PC-3 (cell line): ENCODE measurements at regions of chr15 and their contacts with region 1.

Region 1: GRCh38 chr15:78979456-78980320 is 34.8 kb upstream of the CTSH start:
- DNase-seq: peak; percentile 92
- ATAC-seq: peak; percentile 91
- H3K4me3 ChIP-seq: no peak overlapping the region
- H3K27ac ChIP-seq: peak overlapping the region; percentile 19; the same call in 1 of the 2 replicates
- H3K4me1 ChIP-seq: peaks cover 5% of the 10 kb centered on the region; the same call in 1 of the 2 replicates
- H3K27me3 ChIP-seq: no peaks in the 10 kb centered on the region
- CTCF ChIP-seq: peak; percentile 84

Region 2: DNA sequence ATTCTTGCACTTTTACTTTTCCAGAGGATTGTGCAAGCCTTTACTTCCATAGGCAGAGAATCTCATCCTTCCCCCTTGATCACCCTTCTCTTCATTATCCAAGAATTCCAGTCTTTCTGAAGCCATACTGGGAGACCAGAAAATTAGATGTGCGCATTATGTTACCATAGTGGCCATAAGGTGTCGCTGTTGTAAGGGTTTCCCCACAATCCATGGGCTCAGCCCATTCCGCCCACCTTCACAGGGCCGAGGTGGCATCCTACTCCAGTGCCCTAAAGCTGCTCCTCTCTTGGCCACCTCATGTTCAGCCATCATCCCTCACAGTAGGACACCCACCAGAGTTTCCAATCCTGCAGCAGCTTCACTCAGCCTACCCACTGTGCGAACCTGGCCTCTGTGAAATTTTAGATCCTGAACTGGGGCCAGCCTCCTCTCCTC is 69.9 kb before region 1 on chr15:
- CTCF ChIA-PET with region 1: interaction called, 7 read pairs
- POLR2A ChIA-PET with region 1: no interaction called
- intact Hi-C with region 1: loop called (anchors 1 kb)
- DNase-seq: peak; percentile 73
- ATAC-seq: peak; percentile 69
- H3K4me3 ChIP-seq: no peak overlapping the region
- H3K27ac ChIP-seq: no peak overlapping the region
- H3K4me1 ChIP-seq: peaks cover 16% of the 10 kb centered on the region
- H3K27me3 ChIP-seq: no peaks in the 10 kb centered on the region
- CTCF ChIP-seq: peak; percentile 87

Region 3: DNA sequence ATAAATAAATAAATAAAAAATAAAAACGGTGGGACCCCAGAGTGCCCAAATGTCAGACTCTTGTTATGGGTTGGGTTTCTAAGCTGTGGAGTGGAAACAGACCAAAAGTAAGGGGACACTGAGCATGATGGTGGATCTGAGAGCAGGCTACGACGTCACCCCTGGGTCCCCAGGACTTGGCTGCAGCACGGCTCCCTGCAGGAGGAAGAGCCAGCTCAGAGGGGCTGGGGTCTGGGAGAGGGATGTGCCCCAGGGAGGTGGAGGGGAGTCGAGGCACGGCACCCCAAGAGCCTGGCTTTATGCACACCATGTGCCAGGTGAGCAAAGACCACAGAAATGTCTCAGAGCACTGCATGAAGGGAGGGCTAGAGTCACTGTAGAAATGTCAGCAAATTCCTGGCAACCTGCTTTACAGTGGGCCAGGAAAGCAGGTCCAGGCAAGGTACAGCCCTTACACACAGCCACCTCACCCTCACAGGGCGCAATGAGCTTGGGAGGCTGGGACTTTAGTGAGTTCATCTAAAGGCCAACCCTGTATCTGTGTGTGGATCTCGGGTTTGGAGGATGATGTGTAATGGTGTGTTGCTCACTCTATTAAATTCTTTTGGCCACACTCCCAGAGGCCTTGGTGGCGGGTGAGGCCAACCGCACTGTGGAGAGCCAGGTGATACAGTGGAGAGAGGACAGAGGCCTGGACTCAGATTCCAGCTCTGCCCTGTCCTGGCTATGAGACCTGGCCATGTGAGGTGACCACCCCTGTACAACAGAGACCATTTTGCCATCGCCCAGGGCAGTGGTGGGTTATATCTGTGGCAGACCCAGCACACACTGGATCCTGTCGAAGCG is 48.9 kb before region 1 on chr15:
- CTCF ChIA-PET with region 1: no interaction called
- POLR2A ChIA-PET with region 1: no interaction called
- intact Hi-C with region 1: loop called (anchors 1 kb)
- DNase-seq: peak; percentile 98
- ATAC-seq: peak; percentile 94
- H3K4me3 ChIP-seq: no peak overlapping the region
- H3K27ac ChIP-seq: peak overlapping the region; percentile 98
- H3K4me1 ChIP-seq: peaks cover 23% of the 10 kb centered on the region
- H3K27me3 ChIP-seq: no peaks in the 10 kb centered on the region
- CTCF ChIP-seq: no peak

Region 4: GRCh38 chr15:78950904-78951840 is 28.5 kb before region 1 on chr15:
- CTCF ChIA-PET with region 1: interaction called, 4 read pairs
- POLR2A ChIA-PET with region 1: no interaction called
- intact Hi-C with region 1: loop called (anchors 2 kb)
- DNase-seq: peak; percentile 60
- ATAC-seq: peak; percentile 62
- H3K4me3 ChIP-seq: peak overlapping the region; percentile 37
- H3K27ac ChIP-seq: peak overlapping the region; percentile 88
- H3K4me1 ChIP-seq: peaks cover 41% of the 10 kb centered on the region
- H3K27me3 ChIP-seq: no peaks in the 10 kb centered on the region
- CTCF ChIP-seq: peak; percentile 34; the same call in 1 of the 2 replicates